CD8-positive, alpha-beta T cell (primary cell): ENCODE measurements at regions of chr9 and their contacts with region 1.

Region 1: DNA sequence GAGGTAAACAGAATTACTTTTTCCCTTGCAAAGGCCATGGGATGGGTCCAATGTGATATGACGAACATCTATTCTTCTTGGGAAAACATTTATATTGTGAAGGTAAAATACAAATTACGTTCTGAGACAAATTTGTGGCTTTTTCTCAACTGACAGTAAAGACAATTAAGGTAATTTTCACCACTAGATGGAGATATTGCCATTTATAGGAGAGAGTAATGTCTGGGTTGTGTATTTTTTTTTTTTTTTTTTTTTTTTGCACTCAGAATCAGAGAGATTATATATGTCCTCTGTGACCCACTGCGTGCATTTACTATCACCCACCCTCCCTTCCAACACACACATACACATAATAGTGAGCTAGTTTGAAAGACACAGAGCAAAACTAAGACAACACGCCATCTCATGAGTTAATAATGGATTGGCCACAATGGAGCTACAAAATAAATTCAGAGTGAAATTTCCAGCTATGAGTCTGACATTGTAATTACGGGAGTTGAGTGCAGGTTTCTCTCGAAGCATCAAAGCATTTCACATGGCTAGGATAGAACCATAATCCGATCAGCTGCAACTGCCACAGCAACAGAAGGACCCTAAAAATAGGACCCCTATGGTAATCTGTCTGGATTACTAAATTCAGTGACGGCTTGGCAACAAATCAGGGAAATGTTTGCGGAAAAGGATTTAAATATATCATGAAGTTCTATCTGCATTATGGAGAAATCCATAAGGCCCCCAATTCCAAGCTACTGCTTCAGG is 49.2 kb downstream of the ANXA1 start:
- DNase-seq: peak in 2 of 9 experiments; percentile 33 to 49
- ATAC-seq: no peak
- H3K4me3 ChIP-seq: no peak overlapping the region
- H3K4me3 Mint-ChIP-seq: no peak overlapping the region
- H3K27ac ChIP-seq: no peak overlapping the region
- H3K27ac Mint-ChIP-seq: no peak overlapping the region
- H3K4me1 ChIP-seq: no peaks in the 10 kb centered on the region
- H3K4me1 Mint-ChIP-seq: no peaks in the 10 kb centered on the region
- H3K27me3 ChIP-seq: peaks cover 0 to 2% of the 10 kb centered on the region in 2 experiments
- H3K27me3 Mint-ChIP-seq: peaks cover 23% of the 10 kb centered on the region
- CTCF ChIP-seq: peak; percentile 49

Region 2: DNA sequence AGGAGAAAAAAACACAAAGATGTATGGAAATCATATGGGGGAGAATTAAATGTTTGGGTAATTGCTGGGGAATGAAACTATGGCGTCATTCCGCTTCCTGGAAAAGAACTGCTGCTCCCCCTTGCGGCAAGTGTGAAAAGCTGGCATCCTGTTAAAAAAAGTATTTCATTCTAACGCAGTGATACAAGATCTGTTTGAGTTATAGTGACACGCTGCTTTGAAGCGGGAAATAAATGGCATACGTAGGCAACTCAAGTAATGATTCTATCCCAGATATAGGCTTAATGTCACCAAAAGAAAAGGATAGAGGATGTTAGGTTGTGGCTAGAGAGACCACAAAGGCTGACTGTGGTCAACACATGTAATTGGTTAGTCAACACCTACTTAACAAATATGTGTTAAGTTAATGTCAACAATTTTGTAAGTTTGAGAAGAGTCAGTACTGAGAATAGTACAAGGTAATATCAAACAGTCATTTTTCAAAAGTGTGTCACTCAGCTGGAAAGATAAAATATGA is 177.8 kb before region 1 on chr9:
- CTCF ChIA-PET with region 1: no interaction called
- POLR2A ChIA-PET with region 1: no interaction called
- intact Hi-C with region 1: no loop called
- DNase-seq: peak in 7 of 9 experiments; percentile 17 to 71 (median 52)
- ATAC-seq: peak; percentile 46
- H3K4me3 ChIP-seq: no peak overlapping the region
- H3K4me3 Mint-ChIP-seq: no peak overlapping the region
- H3K27ac ChIP-seq: no peak overlapping the region
- H3K27ac Mint-ChIP-seq: no peak overlapping the region
- H3K4me1 ChIP-seq: peaks cover 3% of the 10 kb centered on the region
- H3K4me1 Mint-ChIP-seq: peaks cover 6% of the 10 kb centered on the region
- H3K27me3 ChIP-seq: no peaks in the 10 kb centered on the region
- H3K27me3 Mint-ChIP-seq: peaks cover 19% of the 10 kb centered on the region
- CTCF ChIP-seq: peak; percentile 53

Region 3: DNA sequence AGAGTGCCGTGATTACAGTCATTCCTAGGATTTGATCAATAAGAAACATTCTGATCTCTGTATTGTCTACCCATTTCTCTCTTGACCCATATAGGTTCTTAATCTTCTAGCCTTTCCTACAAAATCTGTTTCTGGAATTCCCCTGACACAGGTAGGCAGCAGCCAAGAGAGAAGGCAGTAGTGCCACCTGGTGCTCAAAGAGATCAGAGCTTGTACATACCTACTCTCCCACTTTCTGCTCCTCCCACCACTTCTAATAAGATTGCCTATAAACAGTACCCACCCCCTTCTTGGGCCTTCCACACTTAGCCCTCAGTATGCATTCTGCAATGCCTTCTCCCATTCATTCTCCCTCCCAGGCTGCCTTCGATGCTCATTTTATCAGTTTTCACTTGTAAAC is 1178.8 kb after region 1 on chr9:
- CTCF ChIA-PET with region 1: interaction called, 3 read pairs
- POLR2A ChIA-PET with region 1: no interaction called
- intact Hi-C with region 1: loop called in 1 of 2 experiments (anchors 5 kb)
- DNase-seq: peak in 3 of 9 experiments; percentile 19 to 61 (median 49)
- ATAC-seq: peak; percentile 40
- H3K4me3 ChIP-seq: no peak overlapping the region
- H3K4me3 Mint-ChIP-seq: no peak overlapping the region
- H3K27ac ChIP-seq: no peak overlapping the region
- H3K27ac Mint-ChIP-seq: no peak overlapping the region
- H3K4me1 ChIP-seq: no peaks in the 10 kb centered on the region
- H3K4me1 Mint-ChIP-seq: peaks cover 8% of the 10 kb centered on the region
- H3K27me3 ChIP-seq: no peaks in the 10 kb centered on the region
- H3K27me3 Mint-ChIP-seq: no peaks in the 10 kb centered on the region
- CTCF ChIP-seq: no peak

Region 4: DNA sequence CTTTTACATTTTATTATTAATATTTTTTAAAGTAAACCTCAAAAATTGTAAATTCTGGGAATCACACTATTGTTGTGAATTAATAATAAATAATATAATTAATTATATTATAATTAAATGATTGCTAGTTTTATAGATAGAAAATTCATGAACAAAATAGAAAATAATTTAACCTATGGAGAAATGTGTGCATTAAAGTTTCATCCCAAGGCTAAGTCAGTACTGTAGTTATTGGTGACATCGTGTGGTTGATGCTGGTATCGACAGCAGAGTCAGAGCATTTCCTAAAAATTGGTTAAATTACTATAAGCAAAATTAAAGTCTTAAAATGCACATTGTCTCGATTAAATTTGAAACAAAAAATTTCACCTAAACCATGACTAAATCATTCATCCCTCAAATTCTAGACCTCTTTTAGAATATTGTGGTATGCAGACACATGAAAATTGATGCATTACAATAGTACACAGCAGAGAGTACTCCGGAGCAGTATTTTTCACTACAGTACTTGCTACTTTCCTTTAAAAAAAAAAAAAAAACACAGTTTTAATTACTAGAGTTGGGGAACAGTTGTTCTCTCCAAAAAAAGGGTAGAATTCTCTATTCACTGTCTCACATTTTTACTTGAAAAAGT is 1370.1 kb after region 1 on chr9:
- CTCF ChIA-PET with region 1: interaction called, 7 read pairs
- POLR2A ChIA-PET with region 1: no interaction called
- intact Hi-C with region 1: loop called in 1 of 2 experiments (anchors 2 kb)
- DNase-seq: peak in 2 of 9 experiments; percentile 21 to 40
- ATAC-seq: no peak
- H3K4me3 ChIP-seq: no peak overlapping the region
- H3K4me3 Mint-ChIP-seq: no peak overlapping the region
- H3K27ac ChIP-seq: no peak overlapping the region
- H3K27ac Mint-ChIP-seq: no peak overlapping the region
- H3K4me1 ChIP-seq: no peaks in the 10 kb centered on the region
- H3K4me1 Mint-ChIP-seq: no peaks in the 10 kb centered on the region
- H3K27me3 ChIP-seq: no peaks in the 10 kb centered on the region
- H3K27me3 Mint-ChIP-seq: no peaks in the 10 kb centered on the region
- CTCF ChIP-seq: peak; percentile 25

Region 5: DNA sequence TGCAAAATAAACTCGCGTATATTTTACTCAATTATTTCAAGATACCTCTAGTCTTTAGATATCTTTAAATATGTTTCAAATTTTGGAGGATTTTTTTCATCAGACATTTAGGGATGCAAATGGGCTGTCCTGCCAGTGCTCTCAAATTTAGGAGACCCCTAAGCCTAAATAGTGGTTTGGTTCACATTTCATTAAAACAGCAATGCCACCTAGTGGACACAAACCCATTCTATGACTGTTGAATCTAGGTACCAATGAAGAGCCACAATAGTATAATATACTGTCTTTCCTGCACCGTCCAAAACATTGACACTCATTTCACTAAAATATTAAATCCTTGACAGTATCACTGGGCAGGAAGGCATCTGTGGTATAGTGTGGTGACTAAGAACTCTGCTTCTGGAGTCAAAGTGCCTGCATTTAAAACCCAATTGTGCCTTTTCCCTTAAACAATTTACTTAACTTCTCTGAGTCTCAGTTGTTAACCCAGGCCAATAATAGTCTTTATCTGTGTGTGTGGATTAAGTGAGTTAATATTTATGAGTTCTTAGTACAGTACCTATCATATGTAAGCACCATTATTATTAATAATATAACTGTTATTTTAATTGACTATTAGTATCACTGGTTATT is 1444.2 kb after region 1 on chr9:
- CTCF ChIA-PET with region 1: no interaction called
- POLR2A ChIA-PET with region 1: no interaction called
- intact Hi-C with region 1: loop called (anchors 2 to 5 kb)
- DNase-seq: peak in 2 of 9 experiments; percentile 1 to 11
- ATAC-seq: no peak
- H3K4me3 ChIP-seq: no peak overlapping the region
- H3K4me3 Mint-ChIP-seq: no peak overlapping the region
- H3K27ac ChIP-seq: no peak overlapping the region
- H3K27ac Mint-ChIP-seq: no peak overlapping the region
- H3K4me1 ChIP-seq: no peaks in the 10 kb centered on the region
- H3K4me1 Mint-ChIP-seq: no peaks in the 10 kb centered on the region
- H3K27me3 ChIP-seq: no peaks in the 10 kb centered on the region
- H3K27me3 Mint-ChIP-seq: peaks cover 2% of the 10 kb centered on the region
- CTCF ChIP-seq: peak; percentile 16

Region 6: GRCh38 chr9:74742792-74743730 is 1542.2 kb after region 1 on chr9:
- CTCF ChIA-PET with region 1: interaction called, 3 read pairs
- POLR2A ChIA-PET with region 1: no interaction called
- intact Hi-C with region 1: loop called (anchors 5 kb)
- DNase-seq: peak in 2 of 9 experiments; percentile 10 to 22
- ATAC-seq: no peak
- H3K4me3 ChIP-seq: no peak overlapping the region
- H3K4me3 Mint-ChIP-seq: no peak overlapping the region
- H3K27ac ChIP-seq: no peak overlapping the region
- H3K27ac Mint-ChIP-seq: no peak overlapping the region
- H3K4me1 ChIP-seq: no peaks in the 10 kb centered on the region
- H3K4me1 Mint-ChIP-seq: peaks cover 3% of the 10 kb centered on the region
- H3K27me3 ChIP-seq: no peaks in the 10 kb centered on the region
- H3K27me3 Mint-ChIP-seq: peaks cover 30% of the 10 kb centered on the region
- CTCF ChIP-seq: peak; percentile 62